ENCODE measurements at regions of chr11 and their contacts with region 1.

Region 1: GRCh38 chr11:115234794-115235193 is 269.4 kb downstream of the CADM1 start:
- DNase-seq: no peak
- H3K4me3 ChIP-seq: no peak overlapping the region
- CTCF ChIP-seq: no peak
- POLR2A ChIP-seq: no peak

Region 2: DNA sequence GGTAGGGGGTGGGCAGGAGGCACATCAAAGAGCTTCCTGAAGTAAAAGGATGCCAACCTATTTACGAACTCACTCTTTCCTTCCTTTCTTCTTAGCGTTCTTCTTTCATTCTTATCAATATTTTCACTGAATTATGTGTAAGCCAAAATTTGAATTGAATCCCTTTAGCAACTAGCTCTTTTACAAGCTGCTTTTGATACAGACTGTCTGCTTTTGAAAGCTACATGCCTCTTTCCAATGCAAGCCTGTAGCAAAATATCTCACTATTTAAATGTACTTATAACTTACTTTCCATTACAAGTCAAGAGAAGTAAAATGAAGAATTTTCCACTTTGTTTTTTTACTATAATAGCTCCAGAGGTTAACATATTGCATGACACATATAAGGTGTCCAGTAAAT is 369.9 kb before region 1 on chr11:
- intact Hi-C with region 1: no loop called
- DNase-seq: no peak
- H3K4me3 ChIP-seq: no peak overlapping the region
- CTCF ChIP-seq: no peak
- POLR2A ChIP-seq: no peak

Region 3: DNA sequence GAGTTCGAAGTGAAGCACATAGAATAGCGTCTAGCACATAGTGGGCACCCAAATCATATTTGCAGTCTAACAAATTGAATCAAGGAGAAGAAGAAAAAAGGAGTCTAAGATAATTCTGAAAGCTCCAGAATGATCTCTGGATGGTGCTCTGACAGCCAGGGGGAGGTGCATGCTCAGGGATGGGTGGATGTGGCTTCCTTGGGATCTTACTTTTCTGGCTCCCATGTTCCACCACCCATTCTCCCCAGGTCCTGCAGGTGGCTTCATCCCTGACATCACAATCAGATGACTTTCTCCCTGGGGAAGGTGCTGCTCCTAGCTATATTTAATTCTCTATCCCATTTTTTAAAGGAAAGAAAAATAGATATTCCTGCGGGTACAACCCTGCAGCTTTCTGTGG is 112.5 kb before region 1 on chr11:
- intact Hi-C with region 1: no loop called
- DNase-seq: peak in 1 of 2 donors; percentile 58
- H3K4me3 ChIP-seq: no peak overlapping the region
- CTCF ChIP-seq: no peak
- POLR2A ChIP-seq: no peak

Region 4: GRCh38 chr11:115193914-115194801 is 40.6 kb before region 1 on chr11:
- intact Hi-C with region 1: no loop called
- DNase-seq: no peak
- H3K4me3 ChIP-seq: no peak overlapping the region
- CTCF ChIP-seq: no peak
- POLR2A ChIP-seq: no peak

Region 5: DNA sequence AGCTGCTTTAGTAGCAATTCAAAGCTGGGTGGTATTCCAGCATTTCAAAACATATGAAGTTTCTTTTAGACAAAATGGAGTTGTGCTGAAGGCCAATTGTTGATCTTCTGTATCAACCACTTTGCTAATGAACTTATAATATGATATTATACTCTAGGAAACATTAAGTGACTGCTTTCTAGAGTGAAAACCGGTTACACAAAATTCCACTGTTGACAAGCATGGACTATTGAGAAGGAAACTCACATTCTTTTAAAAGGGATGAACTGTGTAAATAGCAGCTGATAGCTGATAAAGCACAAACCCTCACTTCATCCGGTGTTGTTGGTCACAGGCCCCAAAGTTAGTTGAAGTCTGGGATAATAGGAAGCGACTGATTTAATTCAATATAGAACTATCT is 14.3 kb after region 1 on chr11:
- intact Hi-C with region 1: loop called (anchors 2 kb)
- DNase-seq: no peak
- H3K4me3 ChIP-seq: no peak overlapping the region
- CTCF ChIP-seq: no peak
- POLR2A ChIP-seq: no peak

Region 6: DNA sequence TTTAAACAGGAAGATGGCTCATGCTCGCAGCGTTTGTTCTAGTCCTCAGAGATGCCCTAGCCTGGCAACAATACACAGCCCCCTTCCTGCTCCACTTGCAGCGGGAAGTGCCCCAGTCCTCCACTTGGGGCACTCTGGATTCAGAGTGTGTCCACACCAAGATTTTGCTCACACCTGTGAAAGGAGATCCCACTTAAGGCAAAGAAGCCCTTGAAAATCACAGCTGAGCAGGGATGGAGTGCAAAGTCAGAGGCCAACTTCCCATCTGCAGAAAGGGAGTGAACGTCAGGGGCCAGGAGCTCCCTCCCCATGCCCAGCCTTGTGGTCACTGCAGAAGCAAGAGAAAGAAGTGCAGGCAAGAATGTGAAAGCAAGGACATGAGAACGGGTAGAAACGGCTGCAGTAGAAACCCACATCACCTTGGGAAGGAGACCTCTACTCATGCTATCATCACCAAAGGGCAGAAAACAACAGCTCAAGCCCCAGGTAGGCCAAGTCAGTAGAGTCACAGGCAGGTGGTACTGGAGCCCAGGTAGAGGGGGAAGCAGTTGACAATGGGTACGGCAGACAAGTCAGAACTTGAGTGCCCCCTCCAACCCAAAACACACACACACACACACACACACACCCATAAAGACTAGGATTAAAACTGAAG is 1380.5 kb after region 1 on chr11:
- intact Hi-C with region 1: no loop called
- DNase-seq: peak in 1 of 2 donors; percentile 36
- H3K4me3 ChIP-seq: no peak overlapping the region
- CTCF ChIP-seq: no peak
- POLR2A ChIP-seq: no peak